ENCODE measurements at regions of chr1 and their contacts with region 1.

Region 1: DNA sequence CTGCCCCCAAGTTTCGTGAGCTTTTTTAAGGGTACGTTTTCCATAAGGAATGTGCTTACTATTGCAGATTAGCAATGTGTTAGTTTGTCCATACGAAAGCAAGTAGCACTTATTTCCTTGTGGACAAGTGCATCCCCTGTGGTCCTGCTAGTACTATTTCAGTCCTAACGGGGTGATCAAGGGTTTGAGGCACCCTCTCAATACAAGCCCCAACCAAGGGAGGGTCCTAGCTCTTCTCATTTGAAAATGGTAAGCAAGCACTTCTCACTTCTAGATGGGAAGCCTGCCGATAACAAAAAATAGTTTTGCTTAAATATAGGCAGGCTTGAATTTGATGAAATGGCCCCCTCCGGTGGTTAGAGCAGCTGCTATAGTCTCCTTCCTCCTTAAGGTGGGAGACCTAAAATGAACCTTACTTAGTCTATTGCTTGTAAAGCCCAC is 64.0 kb upstream of the HMCN1 start:
- DNase-seq: peak; percentile 50
- H3K4me3 Mint-ChIP-seq: no peak overlapping the region
- H3K27ac Mint-ChIP-seq: no peak overlapping the region
- H3K4me1 Mint-ChIP-seq: peaks cover 21% of the 10 kb centered on the region
- H3K27me3 Mint-ChIP-seq: no peaks in the 10 kb centered on the region

Region 2: GRCh38 chr1:185170291-185170848 is 499.8 kb before region 1 on chr1:
- CTCF ChIA-PET with region 1: interaction called, 14 read pairs
- POLR2A ChIA-PET with region 1: no interaction called
- DNase-seq: peak; percentile 40
- H3K4me3 Mint-ChIP-seq: no peak overlapping the region
- H3K27ac Mint-ChIP-seq: no peak overlapping the region
- H3K4me1 Mint-ChIP-seq: peaks cover 18% of the 10 kb centered on the region
- H3K27me3 Mint-ChIP-seq: no peaks in the 10 kb centered on the region

Region 3: DNA sequence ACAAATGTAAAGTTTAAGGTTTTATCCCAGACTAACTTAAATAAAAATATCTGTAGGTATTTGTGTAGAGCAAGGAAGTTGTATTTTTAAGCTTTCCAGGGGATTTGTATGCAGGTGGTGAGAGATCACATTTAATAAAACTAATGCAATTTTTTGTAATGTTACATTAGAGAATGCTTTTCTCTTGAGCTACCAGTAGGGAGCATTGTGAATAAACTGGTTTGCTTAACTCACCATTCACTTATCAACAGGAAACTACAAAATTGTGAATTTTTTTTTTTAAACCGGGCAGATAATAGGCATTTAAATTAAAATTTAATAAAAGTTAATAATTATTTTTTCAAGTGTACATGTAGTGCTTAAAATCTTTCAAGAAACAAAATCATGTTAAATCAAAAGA is 431.8 kb before region 1 on chr1:
- CTCF ChIA-PET with region 1: interaction called, 11 read pairs
- POLR2A ChIA-PET with region 1: no interaction called
- DNase-seq: no peak
- H3K4me3 Mint-ChIP-seq: no peak overlapping the region
- H3K27ac Mint-ChIP-seq: no peak overlapping the region
- H3K4me1 Mint-ChIP-seq: peaks cover 15% of the 10 kb centered on the region
- H3K27me3 Mint-ChIP-seq: no peaks in the 10 kb centered on the region

Region 4: DNA sequence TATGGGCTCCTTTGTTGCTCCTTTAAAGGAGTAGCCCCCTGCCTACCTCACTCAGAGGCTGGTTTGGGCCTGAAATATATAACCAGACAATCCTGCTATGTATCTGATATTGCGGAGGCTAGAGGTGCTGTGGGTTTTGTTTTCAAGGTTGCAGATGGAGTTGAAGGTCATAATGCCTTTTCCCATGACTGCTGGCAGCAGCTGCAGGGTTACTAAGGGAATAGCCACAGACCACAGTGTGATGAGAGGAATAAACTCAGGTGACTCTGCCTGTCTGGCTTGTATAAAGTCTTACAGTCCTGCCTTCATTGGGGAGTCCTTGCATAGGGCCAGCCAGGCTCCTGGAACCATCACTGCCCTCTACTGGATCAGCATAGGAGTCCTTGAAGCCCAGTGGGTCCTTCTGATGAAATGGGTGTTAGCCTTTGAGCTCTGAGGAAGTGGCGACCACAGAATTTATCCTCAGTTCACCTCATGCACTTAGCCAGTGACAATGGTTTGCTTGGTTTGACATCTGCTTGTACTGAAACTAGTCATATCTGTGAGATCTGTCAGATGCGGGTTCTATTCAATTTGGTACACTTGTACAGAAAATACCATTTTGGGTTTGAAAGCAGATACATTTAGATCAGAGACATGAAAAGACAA is 110.4 kb before region 1 on chr1:
- CTCF ChIA-PET with region 1: interaction called, 12 read pairs
- POLR2A ChIA-PET with region 1: interaction called, 6 read pairs
- DNase-seq: peak; percentile 80
- H3K4me3 Mint-ChIP-seq: no peak overlapping the region
- H3K27ac Mint-ChIP-seq: peak overlapping the region; percentile 86
- H3K4me1 Mint-ChIP-seq: peaks cover 48% of the 10 kb centered on the region
- H3K27me3 Mint-ChIP-seq: no peaks in the 10 kb centered on the region

Region 5: DNA sequence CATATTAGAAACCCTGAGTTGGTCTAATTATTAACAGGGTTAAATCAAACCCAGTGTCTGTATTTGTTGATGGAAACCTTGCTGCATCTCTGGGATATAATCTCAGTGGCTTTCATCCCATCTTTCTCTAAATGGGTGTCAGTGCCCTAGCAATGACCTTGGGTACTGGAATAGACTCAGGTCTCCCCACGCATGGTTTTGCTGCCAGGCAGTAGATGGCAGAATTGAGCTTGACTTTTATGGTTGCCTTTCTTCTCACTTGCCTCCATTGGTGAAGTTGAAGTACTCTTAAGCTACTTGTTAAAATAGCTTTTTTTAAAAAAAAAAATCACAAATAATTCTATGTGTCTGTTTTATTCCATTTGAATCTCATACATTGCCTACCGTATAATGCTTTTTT is 17.9 kb before region 1 on chr1:
- CTCF ChIA-PET with region 1: interaction called, 10 read pairs
- POLR2A ChIA-PET with region 1: no interaction called
- DNase-seq: no peak
- H3K4me3 Mint-ChIP-seq: no peak overlapping the region
- H3K27ac Mint-ChIP-seq: no peak overlapping the region
- H3K4me1 Mint-ChIP-seq: peaks cover 8% of the 10 kb centered on the region
- H3K27me3 Mint-ChIP-seq: no peaks in the 10 kb centered on the region

Region 6: DNA sequence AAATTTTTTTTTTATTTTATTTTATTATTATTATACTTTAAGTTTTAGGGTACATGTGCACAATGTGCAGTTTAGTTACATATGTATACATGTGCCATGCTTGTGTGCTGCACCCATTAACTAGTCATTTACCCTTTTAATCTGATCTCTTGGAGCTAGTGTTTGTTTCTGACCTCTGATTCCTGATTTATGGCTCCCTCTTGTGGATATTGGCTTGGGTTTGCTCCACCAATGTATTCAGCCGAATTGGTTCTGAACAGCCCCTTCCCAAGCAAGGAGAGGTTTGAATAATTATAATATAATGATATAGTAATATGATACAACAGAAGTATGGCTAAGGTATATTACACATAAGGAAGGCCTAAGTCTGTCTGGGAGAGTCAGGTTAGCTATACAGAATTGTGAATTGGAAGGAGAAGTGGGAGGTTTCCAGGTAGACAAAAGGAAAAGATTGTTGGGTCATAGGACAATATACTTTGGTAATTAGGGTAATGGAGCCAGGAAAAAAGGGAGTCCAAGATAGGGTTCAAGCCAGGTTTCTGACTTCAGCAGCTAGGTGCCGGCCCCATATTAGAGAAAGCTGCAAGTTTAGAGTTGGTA is 10.9 kb after region 1 on chr1:
- CTCF ChIA-PET with region 1: interaction called, 13 read pairs
- POLR2A ChIA-PET with region 1: interaction called, 3 read pairs
- DNase-seq: peak; percentile 24
- H3K4me3 Mint-ChIP-seq: no peak overlapping the region
- H3K27ac Mint-ChIP-seq: no peak overlapping the region
- H3K4me1 Mint-ChIP-seq: peaks cover 22% of the 10 kb centered on the region
- H3K27me3 Mint-ChIP-seq: no peaks in the 10 kb centered on the region

Measured in activated CD4-positive, alpha-beta memory T cell treated with anti-CD3 and anti-CD28 coated beads, Interleukin-2, amount 10 ng/mL, durations not matched to agents 7 days and 5 days (primary cell).